ENCODE measurements at regions of chr4 and their contacts with region 1.

Region 1: GRCh38 chr4:44927399-44928380 is 201.3 kb upstream of the GNPDA2 start:
- DNase-seq: no peak
- ATAC-seq: peak; percentile 50

Region 2: DNA sequence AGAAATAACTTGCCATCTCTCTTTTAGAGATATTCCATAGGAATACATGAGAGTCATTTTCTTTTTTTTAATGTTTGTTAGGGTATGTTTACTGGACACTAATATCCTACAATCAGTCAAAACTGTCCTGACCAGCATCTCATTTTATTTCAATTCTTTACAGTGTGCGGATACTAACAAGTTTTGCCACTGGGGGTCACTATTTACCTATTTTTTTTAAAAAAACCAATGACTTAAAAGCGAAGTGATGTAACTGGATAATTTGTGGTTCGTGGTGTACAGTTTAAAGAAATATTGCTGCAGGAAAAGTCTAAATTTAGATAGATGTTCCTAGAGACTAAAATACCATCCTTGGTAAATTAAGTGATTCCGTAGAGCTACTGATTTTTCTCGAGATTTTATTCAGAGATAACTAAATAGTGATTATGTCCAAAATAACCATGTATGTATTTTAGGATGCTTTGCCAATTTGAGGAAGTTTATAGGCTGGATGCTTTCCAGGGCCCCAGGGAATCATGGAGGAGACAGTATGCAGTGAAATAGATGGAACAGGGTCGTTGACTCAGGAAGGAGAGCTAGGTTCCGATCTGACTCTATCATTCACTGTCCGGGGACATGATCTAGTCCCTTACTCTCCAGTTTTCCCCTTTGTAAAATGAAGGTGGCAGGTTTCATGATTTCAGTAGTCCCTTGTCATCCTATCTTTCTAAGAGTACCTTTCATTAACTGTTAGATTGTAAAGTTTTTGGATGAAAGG is 167.4 kb before region 1 on chr4:
- intact Hi-C with region 1: loop called (anchors 5 kb)
- DNase-seq: no peak
- ATAC-seq: peak; percentile 77

Region 3: DNA sequence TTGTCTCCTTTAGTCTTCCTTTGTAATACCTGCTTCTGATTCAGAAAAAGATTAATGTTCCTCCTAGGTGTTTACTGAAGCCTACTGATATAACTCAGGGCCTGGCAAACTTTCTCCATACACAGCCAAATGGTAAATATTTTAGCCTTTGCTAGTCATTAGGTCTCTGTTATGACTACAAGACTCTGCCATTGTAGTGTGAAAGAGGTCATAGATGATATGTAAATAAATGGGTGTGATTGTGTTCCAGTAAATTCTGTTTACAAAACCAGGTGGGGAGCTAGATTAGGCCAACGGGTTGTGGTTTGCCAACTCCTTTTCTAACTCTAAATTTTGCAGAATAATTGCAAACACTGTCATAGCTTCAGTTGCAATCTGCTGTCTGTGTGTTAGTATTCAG is 366.8 kb after region 1 on chr4:
- intact Hi-C with region 1: no loop called
- DNase-seq: no peak
- ATAC-seq: no peak

Region 4: GRCh38 chr4:45442466-45442865 is 514.8 kb after region 1 on chr4:
- intact Hi-C with region 1: loop called (anchors 5 kb)
- DNase-seq: no peak
- ATAC-seq: peak; percentile 53

Region 5: DNA sequence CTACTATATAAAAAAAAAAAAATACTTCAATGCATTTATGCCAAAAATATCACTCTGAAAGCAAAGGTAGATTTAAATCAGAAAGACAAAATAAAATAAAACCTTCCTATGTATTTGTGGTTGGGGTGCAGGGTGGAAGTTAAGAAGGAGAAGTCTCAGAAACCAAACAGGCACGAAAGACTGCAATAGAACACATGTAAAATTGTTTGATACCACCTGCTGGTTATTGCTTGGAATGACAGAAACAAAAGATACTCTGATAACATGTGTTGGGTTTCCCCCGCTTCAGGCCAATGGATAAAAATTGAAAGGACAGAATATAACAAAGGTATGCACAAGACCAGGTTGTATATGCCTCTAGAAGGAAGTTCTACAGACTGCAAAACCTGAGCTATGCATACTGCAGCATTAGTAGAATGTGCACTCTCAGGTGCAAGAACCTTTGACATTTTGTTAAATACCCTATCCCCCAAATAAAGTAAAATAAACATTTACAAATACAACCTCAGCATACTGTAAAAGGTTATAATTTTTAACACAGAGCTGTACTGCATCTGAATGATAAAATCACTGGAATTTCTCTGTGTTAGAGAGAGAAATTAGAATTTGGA is 1343.4 kb after region 1 on chr4:
- intact Hi-C with region 1: loop called (anchors 10 kb)
- DNase-seq: no peak
- ATAC-seq: no peak